ENCODE measurements at regions of chr1 and their contacts with region 1.

Region 1: GRCh38 chr1:192003295-192004077 is 154.8 kb upstream of the RGS18 start:
- DNase-seq: no peak
- ATAC-seq: no peak

Region 2: DNA sequence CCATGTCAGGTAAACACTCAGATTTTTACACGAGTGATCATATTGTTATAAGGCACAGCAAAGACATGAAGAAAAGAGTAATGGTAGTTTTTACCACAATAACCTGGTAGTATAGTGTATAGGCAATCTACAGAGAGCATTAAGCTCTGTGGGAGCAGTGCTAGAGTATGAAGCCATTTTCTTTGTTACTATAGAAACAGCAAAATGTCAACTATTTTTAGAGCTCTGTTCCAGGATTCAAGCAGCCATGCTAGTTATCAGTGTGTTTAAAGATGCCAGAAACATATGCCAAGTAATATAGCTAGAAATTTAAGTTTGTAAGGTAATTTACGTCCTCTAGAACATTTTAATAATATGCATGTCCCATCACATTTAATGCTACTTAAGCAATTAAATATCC is 77.2 kb after region 1 on chr1:
- intact Hi-C with region 1: loop called (anchors 2 kb)
- DNase-seq: no peak
- ATAC-seq: no peak

Region 3: DNA sequence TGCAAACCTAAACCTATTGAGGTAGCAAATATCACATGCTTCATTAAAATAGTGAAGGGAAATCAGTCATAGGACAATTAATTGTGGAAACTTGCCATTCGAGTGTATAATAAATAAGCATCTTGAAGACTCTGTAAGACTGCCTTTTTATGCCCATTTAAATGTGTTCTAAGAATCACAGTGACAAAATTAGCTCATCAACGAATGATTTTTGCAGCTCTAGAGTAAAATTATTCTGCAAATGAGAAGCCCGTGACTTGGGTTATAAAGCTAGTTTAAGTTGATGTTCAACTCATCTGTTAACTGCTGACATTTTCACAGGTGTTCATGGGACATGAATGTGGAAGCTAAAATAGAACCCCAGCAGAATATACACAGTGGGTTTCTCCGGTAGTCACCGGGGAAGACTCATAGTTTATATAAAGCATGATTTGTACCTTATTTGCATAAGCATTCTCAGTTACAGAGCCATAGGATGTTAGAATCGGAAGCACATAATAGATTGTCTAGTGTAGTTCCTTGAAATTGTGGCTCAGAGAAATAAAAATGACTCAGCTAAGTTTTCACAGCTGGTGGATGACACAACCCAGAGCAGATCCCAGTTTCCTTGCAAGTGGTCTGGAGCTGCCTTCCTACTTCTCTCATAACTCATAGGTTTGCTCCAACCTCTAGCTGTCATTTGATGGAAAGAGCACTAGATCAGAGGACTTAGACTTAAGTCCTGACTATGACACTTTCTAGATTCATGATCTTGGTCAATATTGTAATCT is 948.4 kb after region 1 on chr1:
- intact Hi-C with region 1: no loop called
- DNase-seq: no peak
- ATAC-seq: peak; percentile 58

Measured in sciatic nerve (tissue), 2 donors.